Activated CD4-positive, alpha-beta T cell treated with anti-CD3 and anti-CD28 coated beads, Interleukin-2, amount 10 ng/mL, durations not matched to agents 24 days and 14 days (primary cell): ENCODE measurements at regions of chr3 and their contacts with region 1.

Region 1: GRCh38 chr3:102085431-102086176 is 236.3 kb downstream of the NFKBIZ start:
- DNase-seq: peak; percentile 55
- H3K4me3 Mint-ChIP-seq: peak overlapping the region; percentile 4
- H3K27ac Mint-ChIP-seq: peak overlapping the region; percentile 62
- H3K4me1 Mint-ChIP-seq: peaks cover 22% of the 10 kb centered on the region
- H3K27me3 Mint-ChIP-seq: peaks cover 4% of the 10 kb centered on the region

Region 2: GRCh38 chr3:101050046-101050445 is 1035.6 kb before region 1 on chr3:
- intact Hi-C with region 1: no loop called
- DNase-seq: no peak
- H3K4me3 Mint-ChIP-seq: no peak overlapping the region
- H3K27ac Mint-ChIP-seq: no peak overlapping the region
- H3K4me1 Mint-ChIP-seq: no peaks in the 10 kb centered on the region
- H3K27me3 Mint-ChIP-seq: peaks cover 6% of the 10 kb centered on the region

Region 3: DNA sequence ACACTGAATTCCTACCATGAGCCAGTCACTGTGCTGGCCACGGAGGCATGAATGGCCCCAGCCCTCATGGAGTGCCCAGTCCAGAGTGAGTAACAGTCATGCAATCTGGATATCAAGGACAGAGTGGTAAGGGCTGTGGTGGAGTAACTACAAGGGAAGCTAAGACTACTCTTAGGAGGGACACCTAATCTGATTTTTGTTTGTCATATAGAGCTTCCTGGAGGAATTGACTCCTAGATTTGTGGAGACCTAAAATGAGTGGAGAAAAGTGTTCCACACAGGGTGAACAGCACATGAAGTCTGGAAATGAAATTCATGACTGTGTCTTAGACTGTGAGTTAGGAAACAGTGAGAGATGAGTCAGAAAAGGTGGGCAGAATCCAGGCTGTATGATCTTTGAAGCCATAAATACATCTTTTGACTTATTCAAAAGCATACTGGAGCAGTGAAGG is 16.4 kb before region 1 on chr3:
- intact Hi-C with region 1: loop called (anchors 1 kb)
- DNase-seq: no peak
- H3K4me3 Mint-ChIP-seq: no peak overlapping the region
- H3K27ac Mint-ChIP-seq: no peak overlapping the region
- H3K4me1 Mint-ChIP-seq: peaks cover 10% of the 10 kb centered on the region
- H3K27me3 Mint-ChIP-seq: no peaks in the 10 kb centered on the region

Region 4: DNA sequence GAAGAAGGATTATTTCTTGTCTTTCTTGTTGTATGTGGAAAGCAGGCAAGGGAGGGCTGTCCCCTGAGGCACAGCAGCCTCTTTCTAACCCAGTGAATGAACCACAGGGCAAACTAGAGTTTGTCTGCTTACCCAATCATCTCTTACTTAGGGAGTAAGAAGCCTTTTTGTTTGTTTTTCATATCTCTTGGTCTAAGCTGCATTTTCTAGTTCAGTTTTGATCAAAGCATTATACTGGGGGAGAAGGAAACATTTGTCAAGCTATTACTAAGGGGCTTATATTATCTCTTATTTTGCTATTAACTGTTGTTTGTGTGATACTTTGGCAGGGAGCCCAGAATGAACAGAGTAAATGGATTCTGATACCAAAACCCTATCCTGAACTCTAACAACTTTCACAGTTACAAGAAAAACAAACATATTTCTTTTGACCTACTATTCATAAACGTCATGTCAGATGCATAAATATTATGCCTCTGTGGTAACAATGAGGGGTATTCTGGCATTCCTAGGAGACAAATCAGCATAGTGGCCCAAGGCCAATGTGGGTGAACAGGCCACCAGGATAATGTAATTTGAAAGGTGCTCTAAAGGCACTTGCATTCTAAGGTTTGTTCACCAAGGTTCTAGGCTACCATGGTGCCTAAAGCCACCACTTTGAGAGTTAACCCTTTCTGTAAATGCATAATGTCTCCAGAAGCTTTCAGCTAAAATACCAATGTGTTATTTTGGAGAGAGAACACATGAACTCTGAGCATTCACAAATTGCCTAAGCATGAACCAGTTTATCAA is 77.6 kb after region 1 on chr3:
- intact Hi-C with region 1: loop called (anchors 1 kb)
- DNase-seq: no peak
- H3K4me3 Mint-ChIP-seq: no peak overlapping the region
- H3K27ac Mint-ChIP-seq: peak overlapping the region; percentile 0
- H3K4me1 Mint-ChIP-seq: peaks cover 14% of the 10 kb centered on the region
- H3K27me3 Mint-ChIP-seq: no peaks in the 10 kb centered on the region